ENCODE measurements at regions of chrX and their contacts with region 1.

Region 1: DNA sequence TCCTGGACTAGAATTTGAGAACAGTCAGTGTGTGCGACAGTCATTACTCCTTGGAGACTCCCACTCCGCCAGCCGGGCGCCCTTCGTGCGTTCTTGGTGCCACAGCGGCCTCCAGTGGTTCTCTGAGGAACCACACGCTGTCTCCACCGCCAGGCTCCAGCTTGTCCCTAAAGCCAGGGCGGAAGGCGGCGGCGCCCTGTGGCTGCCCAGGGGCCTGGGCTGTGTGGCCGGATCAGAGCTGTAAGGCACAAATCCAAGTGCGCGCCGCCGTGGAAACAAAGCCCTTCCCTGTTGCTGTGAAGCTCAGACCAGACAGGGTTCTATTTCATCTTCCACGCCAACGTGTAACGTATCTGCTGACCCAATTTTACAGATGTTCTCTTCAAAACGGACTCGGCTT is 34.2 kb downstream of the IDS start:
- DNase-seq: peak; percentile 28
- H3K4me3 Mint-ChIP-seq: no peak overlapping the region
- H3K27ac Mint-ChIP-seq: no peak overlapping the region
- H3K4me1 Mint-ChIP-seq: no peaks in the 10 kb centered on the region
- H3K27me3 Mint-ChIP-seq: peaks cover 15% of the 10 kb centered on the region

Region 2: GRCh38 chrX:148049441-148049840 is 1421.5 kb before region 1 on chrX:
- intact Hi-C with region 1: loop called (anchors 1 kb)
- DNase-seq: no peak
- H3K4me3 Mint-ChIP-seq: no peak overlapping the region
- H3K27ac Mint-ChIP-seq: no peak overlapping the region
- H3K4me1 Mint-ChIP-seq: no peaks in the 10 kb centered on the region
- H3K27me3 Mint-ChIP-seq: no peaks in the 10 kb centered on the region

Measured in activated T-helper 1 cell treated with anti-CD3 and anti-CD28 coated beads, Interleukin-12 subunit alpha, Interleukin-12 subunit beta, Interleukin-2, Interleukin-4 antibody, amounts not matched to agents 30 ng/mL and 10 ng/mL and 1 ng/mL, durations not matched to agents 14 hours and 24 hours and 36 hours (primary cell).